ENCODE measurements at regions of chr10 and their contacts with region 1.

Region 1: GRCh38 chr10:38038107-38038931 is 27.8 kb downstream of the ZNF33A start:
- DNase-seq: no peak
- ATAC-seq: peak; percentile 81
- H3K4me3 Mint-ChIP-seq: peak overlapping the region; percentile 74
- H3K27ac Mint-ChIP-seq: peak overlapping the region; percentile 87
- H3K4me1 Mint-ChIP-seq: peaks cover 36% of the 10 kb centered on the region
- H3K27me3 Mint-ChIP-seq: no peaks in the 10 kb centered on the region
- CTCF ChIP-seq: no peak

Region 2: GRCh38 chr10:37857287-37858211 is 180.8 kb before region 1 on chr10 and contains the start of gene ZNF248:
- CTCF ChIA-PET with region 1: no interaction called
- POLR2A ChIA-PET with region 1: no interaction called
- intact Hi-C with region 1: loop called (anchors 5 kb)
- DNase-seq: peak; percentile 91
- ATAC-seq: peak; percentile 96
- H3K4me3 Mint-ChIP-seq: peak within 1 kb of the TSS; percentile 95
- H3K27ac Mint-ChIP-seq: peak within 1 kb of the TSS; percentile 93
- H3K4me1 Mint-ChIP-seq: peaks cover 31% of the 10 kb centered on the region
- H3K27me3 Mint-ChIP-seq: no peaks in the 10 kb centered on the region
- CTCF ChIP-seq: no peak
- total RNA-seq, gene ZNF248: 9.2 and 12.1 TPM in 2 replicates

Region 3: GRCh38 chr10:37976091-37976879 is 62.0 kb before region 1 on chr10 and contains the start of gene ZNF25:
- CTCF ChIA-PET with region 1: no interaction called
- POLR2A ChIA-PET with region 1: interaction called, 3 read pairs
- intact Hi-C with region 1: loop called (anchors 2 kb)
- DNase-seq: peak; percentile 93
- ATAC-seq: peak; percentile 91
- H3K4me3 Mint-ChIP-seq: peak within 1 kb of the TSS; percentile 90
- H3K27ac Mint-ChIP-seq: peak within 1 kb of the TSS; percentile 95
- H3K4me1 Mint-ChIP-seq: peaks cover 19% of the 10 kb centered on the region
- H3K27me3 Mint-ChIP-seq: no peaks in the 10 kb centered on the region
- CTCF ChIP-seq: peak; percentile 24
- total RNA-seq, gene ZNF25: 3.2 and 3.5 TPM in 2 replicates

Region 4: DNA sequence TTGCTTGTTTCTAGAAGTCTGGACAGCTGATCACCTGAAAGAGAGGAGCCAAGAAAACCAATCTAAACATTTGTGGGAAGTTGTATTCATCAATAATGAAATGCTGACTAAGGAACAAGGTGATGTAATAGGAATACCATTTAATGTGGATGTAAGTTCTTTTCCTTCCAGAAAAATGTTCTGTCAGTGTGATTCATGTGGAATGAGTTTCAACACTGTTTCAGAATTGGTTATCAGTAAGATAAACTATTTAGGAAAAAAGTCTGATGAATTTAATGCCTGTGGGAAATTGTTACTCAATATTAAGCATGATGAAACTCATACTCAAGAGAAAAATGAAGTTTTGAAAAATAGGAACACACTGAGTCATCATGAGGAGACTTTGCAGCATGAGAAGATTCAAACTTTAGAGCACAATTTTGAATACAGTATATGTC is 16.1 kb after region 1 on chr10:
- CTCF ChIA-PET with region 1: no interaction called
- POLR2A ChIA-PET with region 1: no interaction called
- intact Hi-C with region 1: loop called (anchors 2 kb)
- DNase-seq: no peak
- ATAC-seq: no peak
- H3K4me3 Mint-ChIP-seq: no peak overlapping the region
- H3K27ac Mint-ChIP-seq: no peak overlapping the region
- H3K4me1 Mint-ChIP-seq: no peaks in the 10 kb centered on the region
- H3K27me3 Mint-ChIP-seq: no peaks in the 10 kb centered on the region
- CTCF ChIP-seq: no peak

Region 5: DNA sequence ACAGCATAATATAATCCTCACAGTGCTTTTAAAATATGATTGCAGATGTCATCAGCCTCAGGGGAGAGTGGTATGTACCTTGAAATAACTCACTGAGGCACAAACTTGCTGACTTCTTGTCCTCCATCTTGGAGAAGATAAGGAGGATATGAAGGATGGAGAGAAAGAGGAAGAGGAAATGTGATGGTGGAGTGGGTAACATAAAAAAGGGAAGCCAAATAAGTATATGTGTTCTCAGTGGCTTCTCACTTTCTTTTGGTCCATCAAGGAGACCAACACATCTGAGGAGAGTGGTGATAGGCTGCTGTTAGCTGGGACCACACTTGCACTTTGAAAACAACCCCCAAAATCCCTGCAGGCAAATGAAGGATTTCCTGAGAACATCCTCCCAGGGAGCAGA is 34.2 kb after region 1 on chr10:
- CTCF ChIA-PET with region 1: no interaction called
- POLR2A ChIA-PET with region 1: no interaction called
- intact Hi-C with region 1: no loop called
- DNase-seq: no peak
- ATAC-seq: no peak
- H3K4me3 Mint-ChIP-seq: no peak overlapping the region
- H3K27ac Mint-ChIP-seq: no peak overlapping the region
- H3K4me1 Mint-ChIP-seq: peaks cover 6% of the 10 kb centered on the region
- H3K27me3 Mint-ChIP-seq: no peaks in the 10 kb centered on the region
- CTCF ChIP-seq: no peak

Measured in activated B cell treated with CpG ODN at 0.5 μM for 24 hours (primary cell).